ENCODE measurements at regions of chr2 and their contacts with region 1.

Region 1: GRCh38 chr2:197777823-197778407 is 7.2 kb downstream of the BOLL start:
- DNase-seq: peak; percentile 51
- ATAC-seq: no peak
- H3K4me3 Mint-ChIP-seq: no peak overlapping the region
- H3K27ac Mint-ChIP-seq: no peak overlapping the region
- H3K4me1 Mint-ChIP-seq: no peaks in the 10 kb centered on the region
- H3K27me3 Mint-ChIP-seq: peaks cover 6% of the 10 kb centered on the region

Region 2: DNA sequence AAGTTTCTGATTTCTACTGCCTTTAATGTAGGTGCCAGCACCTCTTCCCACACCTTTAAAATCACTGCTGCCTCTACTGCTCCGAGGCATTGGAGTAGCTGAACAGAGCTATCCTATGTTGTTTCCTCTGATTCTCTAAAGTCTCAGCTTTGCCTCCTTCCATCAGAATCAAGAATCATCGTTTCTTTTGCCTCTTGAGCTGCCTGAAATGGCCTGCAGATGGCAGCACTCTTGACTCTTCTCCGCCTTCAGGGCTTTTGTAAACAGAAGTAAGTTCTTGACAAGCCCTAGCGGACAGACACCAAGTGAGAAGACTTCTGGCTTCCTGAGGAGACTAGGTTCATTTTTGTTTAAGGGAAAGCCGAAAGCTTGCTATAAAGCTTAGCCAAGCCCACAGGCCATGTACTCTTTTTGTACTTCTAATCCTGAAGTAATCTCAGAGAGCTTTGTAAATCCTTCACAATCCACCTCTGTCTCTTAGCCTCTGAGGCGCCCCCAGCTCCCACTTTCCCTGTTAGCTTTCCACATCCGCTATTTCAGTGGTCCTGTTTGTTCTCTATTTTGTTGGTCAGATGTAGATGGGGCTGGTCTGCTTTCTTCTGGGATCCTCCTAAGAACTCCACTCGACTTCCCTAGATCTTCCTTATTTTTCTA is 1026.8 kb before region 1 on chr2:
- CTCF ChIA-PET with region 1: interaction called, 3 read pairs
- POLR2A ChIA-PET with region 1: no interaction called
- intact Hi-C with region 1: loop called in 1 of 2 experiments (anchors 5 kb)
- DNase-seq: peak; percentile 82
- ATAC-seq: peak; percentile 95
- H3K4me3 Mint-ChIP-seq: no peak overlapping the region
- H3K27ac Mint-ChIP-seq: no peak overlapping the region
- H3K4me1 Mint-ChIP-seq: peaks cover 7% of the 10 kb centered on the region
- H3K27me3 Mint-ChIP-seq: no peaks in the 10 kb centered on the region

Region 3: GRCh38 chr2:197378494-197379307 is 399.2 kb before region 1 on chr2:
- CTCF ChIA-PET with region 1: interaction called, 3 read pairs
- POLR2A ChIA-PET with region 1: no interaction called
- intact Hi-C with region 1: loop called in 1 of 2 experiments (anchors 5 kb)
- DNase-seq: peak; percentile 80
- ATAC-seq: peak; percentile 83
- H3K4me3 Mint-ChIP-seq: no peak overlapping the region
- H3K27ac Mint-ChIP-seq: no peak overlapping the region
- H3K4me1 Mint-ChIP-seq: peaks cover 19% of the 10 kb centered on the region
- H3K27me3 Mint-ChIP-seq: no peaks in the 10 kb centered on the region

Region 4: DNA sequence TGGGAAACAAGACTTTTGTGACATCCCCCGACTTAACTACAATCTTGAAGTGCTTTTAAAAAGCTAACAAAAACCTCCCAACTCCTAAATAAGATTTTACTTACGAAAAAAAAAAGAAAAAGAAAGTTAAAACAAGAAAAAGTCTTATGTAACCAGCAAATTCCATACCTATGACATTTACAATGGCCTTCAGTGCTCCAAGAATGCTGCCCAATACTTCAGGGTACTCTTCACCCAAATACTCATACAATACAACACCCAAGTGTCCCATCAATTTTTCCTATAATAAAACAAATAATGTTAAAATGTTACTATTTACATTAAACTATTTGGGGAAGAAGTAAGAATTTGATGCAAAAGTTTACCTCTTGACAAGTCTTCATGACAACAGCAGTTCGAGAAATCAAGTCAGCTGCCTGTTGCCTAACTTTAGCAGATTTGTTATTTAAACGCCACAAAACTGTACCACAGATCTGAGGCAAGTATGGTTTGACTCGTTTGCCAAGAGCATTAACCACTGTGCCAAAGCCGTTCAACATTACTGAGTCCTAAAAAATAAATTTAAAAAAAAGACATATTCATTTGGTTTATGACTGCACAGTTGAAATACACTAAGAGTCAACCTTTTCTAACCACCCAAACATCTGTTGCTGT is 377.9 kb before region 1 on chr2:
- CTCF ChIA-PET with region 1: interaction called, 3 read pairs
- POLR2A ChIA-PET with region 1: no interaction called
- intact Hi-C with region 1: loop called in 1 of 2 experiments (anchors 10 kb)
- DNase-seq: no peak
- ATAC-seq: no peak
- H3K4me3 Mint-ChIP-seq: no peak overlapping the region
- H3K27ac Mint-ChIP-seq: peak overlapping the region; percentile 1
- H3K4me1 Mint-ChIP-seq: no peaks in the 10 kb centered on the region
- H3K27me3 Mint-ChIP-seq: no peaks in the 10 kb centered on the region

Region 5: DNA sequence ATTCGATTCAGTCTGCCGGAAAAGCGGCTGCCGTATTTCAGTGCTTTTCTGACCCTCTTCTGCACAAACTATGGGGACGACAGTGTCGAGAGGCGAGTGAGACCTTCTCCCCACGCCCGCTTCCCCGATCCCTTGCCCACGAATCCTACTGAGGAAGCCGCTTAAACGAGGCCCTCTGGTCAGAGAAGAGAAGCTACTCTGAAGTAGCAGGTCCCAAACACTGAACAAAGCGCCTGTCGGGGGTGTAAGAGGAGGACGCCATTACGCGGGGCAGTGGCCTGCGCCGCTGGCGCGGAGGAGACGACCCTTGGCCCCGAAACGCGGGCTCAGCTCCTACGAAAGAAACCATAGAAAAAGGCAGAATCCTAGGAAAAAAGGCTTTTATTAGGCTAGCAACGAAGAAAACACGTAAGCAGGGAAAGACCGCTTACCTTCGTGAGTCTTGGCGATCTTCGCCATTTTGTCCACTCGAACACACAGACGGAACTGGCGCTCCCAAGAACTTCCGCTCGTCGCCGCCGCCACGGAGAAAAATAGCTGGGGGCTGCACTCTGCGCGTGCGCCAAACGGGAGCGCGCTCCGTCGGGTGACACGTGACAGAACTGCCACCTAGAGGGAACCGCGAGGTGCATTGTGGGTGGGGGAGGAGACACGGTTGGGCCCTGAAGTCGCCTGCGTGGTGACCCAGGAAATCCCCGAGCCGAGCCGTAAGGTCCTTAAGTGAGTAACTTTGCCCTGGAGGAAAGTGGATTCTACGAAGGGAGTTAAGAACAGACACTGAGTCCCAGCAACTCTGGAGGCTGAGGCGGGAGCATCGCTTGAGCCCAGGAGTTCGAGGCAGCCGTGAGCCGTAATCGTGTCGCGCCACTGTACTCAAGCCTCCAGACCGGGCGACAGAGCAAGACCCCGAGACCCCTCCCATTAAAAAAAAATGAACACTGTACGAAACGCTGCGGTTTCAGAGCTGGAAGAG is 343.1 kb before region 1 on chr2 and contains the start of gene SF3B1:
- CTCF ChIA-PET with region 1: no interaction called
- POLR2A ChIA-PET with region 1: no interaction called
- intact Hi-C with region 1: loop called (anchors 5 kb)
- DNase-seq: peak; percentile 100
- ATAC-seq: peak; percentile 94
- H3K4me3 Mint-ChIP-seq: peak within 1 kb of the TSS; percentile 98
- H3K27ac Mint-ChIP-seq: peak within 1 kb of the TSS; percentile 99
- H3K4me1 Mint-ChIP-seq: peaks cover 44% of the 10 kb centered on the region
- H3K27me3 Mint-ChIP-seq: no peaks in the 10 kb centered on the region
- total RNA-seq, gene SF3B1: 262 to 277 TPM

Region 6: DNA sequence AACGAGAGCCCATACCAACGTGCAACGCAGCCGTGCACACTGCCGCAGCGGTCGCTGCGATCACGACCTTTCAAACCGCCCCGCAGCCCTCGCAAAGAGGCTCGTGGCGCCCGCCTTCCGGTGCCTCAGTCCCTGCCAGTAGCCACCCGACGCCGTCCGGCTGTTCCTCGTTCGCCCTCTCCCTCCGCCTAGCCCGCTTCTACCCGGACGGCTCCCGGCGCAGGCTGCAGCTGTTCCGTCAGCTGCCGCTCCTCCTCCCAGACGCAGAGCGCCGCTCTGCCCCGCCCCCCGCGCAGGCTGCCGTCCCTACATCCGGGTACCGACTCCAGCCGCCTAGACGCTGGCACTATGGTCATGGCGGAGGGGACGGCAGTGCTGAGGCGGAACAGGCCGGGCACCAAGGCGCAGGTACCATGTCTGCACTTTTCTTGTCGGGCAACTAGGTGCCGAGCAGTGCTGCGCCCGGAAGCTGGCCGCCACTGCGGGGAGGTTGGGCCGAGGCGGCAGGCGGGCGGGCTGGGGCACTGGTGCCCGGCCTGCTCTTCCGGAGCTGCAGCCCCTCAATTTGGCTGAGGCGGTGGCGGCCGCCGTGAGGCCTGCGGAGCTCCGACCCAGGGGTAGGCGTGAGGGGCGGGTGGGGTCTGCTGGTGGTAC is 262.0 kb before region 1 on chr2 and contains the start of gene MOB4:
- CTCF ChIA-PET with region 1: no interaction called
- POLR2A ChIA-PET with region 1: no interaction called
- intact Hi-C with region 1: loop called in 1 of 2 experiments (anchors 2 kb)
- DNase-seq: peak; percentile 97
- ATAC-seq: peak; percentile 95
- H3K4me3 Mint-ChIP-seq: peak within 1 kb of the TSS; percentile 94
- H3K27ac Mint-ChIP-seq: peak within 1 kb of the TSS; percentile 96
- H3K4me1 Mint-ChIP-seq: peaks cover 21% of the 10 kb centered on the region
- H3K27me3 Mint-ChIP-seq: no peaks in the 10 kb centered on the region
- total RNA-seq, gene MOB4: 10.8 to 17.1 TPM

Region 7: GRCh38 chr2:197972061-197972460 is 194.1 kb after region 1 on chr2:
- CTCF ChIA-PET with region 1: no interaction called
- POLR2A ChIA-PET with region 1: no interaction called
- intact Hi-C with region 1: no loop called
- DNase-seq: no peak
- ATAC-seq: no peak
- H3K4me3 Mint-ChIP-seq: no peak overlapping the region
- H3K27ac Mint-ChIP-seq: no peak overlapping the region
- H3K4me1 Mint-ChIP-seq: peaks cover 39% of the 10 kb centered on the region
- H3K27me3 Mint-ChIP-seq: no peaks in the 10 kb centered on the region

Measured in activated CD4-positive, alpha-beta T cell treated with anti-CD3 and anti-CD28 coated beads for 36 hours (primary cell).